ENCODE measurements at regions of chr14 and their contacts with region 1.

Region 1: GRCh38 chr14:105581551-105582341 is 55.4 kb downstream of the TMEM121 start:
- DNase-seq: no peak
- ATAC-seq: no peak
- H3K4me3 ChIP-seq: no peak overlapping the region
- H3K27ac ChIP-seq: no peak overlapping the region
- H3K4me1 ChIP-seq: no peaks in the 10 kb centered on the region
- H3K27me3 ChIP-seq: no peaks in the 10 kb centered on the region
- CTCF ChIP-seq: no peak
- EP300 ChIP-seq: no peak
- POLR2A ChIP-seq: no peak
- RAD21 ChIP-seq: no peak

Region 2: DNA sequence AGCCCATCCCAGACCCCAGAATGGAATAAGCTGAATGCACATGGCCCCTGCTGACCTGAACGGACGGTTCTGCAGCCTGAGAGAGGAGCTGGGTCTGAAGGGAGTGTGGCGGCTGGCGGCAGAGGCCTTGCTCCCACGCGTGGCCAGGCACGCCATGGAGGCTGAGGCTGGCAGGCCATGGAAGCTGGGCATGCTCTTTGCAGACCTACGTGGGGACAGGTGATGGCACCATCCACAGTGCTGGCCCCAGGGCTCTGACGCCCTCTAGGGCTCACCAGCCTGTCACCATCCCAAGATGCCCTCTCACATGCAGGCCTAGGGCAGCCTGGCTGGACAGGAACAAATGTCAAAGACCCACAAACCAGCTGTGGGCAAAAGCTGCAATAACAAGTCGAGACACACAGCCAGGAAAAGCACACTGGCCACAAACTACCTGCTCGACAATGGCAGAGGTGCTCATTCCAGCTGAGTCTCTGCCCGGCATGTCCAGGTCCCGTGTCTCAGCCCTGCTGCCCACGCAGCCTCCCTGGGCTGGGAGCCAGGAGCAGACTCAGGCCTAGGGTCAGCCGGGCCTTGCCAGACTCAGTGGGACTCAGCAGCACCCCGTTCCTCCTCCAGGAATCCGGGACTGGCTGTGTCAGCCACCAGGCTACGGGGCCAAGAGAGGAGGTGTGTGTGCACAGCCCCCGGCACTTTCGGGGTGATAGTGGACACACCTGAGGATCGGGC is 313.8 kb before region 1 on chr14:
- CTCF ChIA-PET with region 1: no interaction called
- POLR2A ChIA-PET with region 1: no interaction called
- in situ Hi-C with region 1: no loop called
- intact Hi-C with region 1: no loop called
- DNase-seq: no peak
- ATAC-seq: no peak
- H3K4me3 ChIP-seq: no peak overlapping the region
- H3K27ac ChIP-seq: no peak overlapping the region
- H3K4me1 ChIP-seq: peaks cover 0 to 5% of the 10 kb centered on the region in 2 experiments; a peak in 2 of 5 replicates
- H3K27me3 ChIP-seq: no peaks in the 10 kb centered on the region
- CTCF ChIP-seq: no peak
- EP300 ChIP-seq: no peak
- POLR2A ChIP-seq: no peak
- RAD21 ChIP-seq: no peak

Region 3: DNA sequence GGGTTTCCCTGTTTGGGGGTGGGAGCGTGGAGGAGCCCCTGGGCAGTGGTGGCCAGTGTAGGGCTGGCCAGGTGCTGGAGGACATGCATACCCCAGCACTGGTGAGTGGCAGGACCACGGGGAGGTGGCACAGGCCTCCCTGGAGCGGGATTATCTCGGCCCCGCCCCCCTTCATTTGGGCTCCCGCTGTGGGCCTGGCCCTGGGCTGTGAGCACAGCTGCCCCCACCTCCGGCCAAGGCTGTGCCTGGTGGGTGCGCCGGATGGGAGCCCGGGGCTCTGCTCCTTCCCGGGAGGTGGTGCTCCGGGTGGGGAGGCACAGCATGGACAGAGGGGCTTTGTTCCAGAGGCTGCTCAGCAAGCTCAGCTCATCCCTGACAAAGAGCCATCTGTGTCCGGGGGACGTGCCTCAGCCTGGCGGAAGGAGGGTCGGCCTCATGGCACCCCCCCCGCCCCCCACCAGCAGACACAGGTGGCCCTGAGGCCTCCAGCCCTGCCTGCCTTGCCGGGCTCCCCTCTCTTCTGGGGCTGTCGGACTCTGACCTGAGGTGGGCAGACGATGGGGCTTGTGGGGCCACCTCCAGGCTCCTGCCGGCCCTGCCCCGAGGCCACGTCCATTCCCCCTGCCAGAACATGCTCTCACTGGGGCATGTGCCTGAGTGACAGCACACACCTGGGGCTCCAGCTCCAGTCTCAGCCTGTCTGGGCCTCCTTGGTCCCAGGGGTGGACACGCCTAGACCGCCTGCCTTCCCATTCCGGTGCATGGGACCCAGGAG is 82.3 kb before region 1 on chr14:
- CTCF ChIA-PET with region 1: no interaction called
- POLR2A ChIA-PET with region 1: no interaction called
- in situ Hi-C with region 1: no loop called
- intact Hi-C with region 1: no loop called
- DNase-seq: no peak
- ATAC-seq: no peak; the same call in 2 of the 3 replicates
- H3K4me3 ChIP-seq: no peak overlapping the region
- H3K27ac ChIP-seq: no peak overlapping the region
- H3K4me1 ChIP-seq: peaks cover 0 to 57% of the 10 kb centered on the region in 2 experiments; a peak in 2 of 5 replicates
- H3K27me3 ChIP-seq: no peaks in the 10 kb centered on the region; a peak in 1 of 5 replicates
- CTCF ChIP-seq: no peak
- EP300 ChIP-seq: no peak
- POLR2A ChIP-seq: no peak
- RAD21 ChIP-seq: no peak

Region 4: GRCh38 chr14:105700622-105701288 is 119.0 kb after region 1 on chr14:
- CTCF ChIA-PET with region 1: no interaction called
- POLR2A ChIA-PET with region 1: no interaction called
- in situ Hi-C with region 1: loop called (anchors 5 kb)
- intact Hi-C with region 1: loop called (anchors 5 kb)
- DNase-seq: no peak
- ATAC-seq: no peak
- H3K4me3 ChIP-seq: no peak overlapping the region
- H3K27ac ChIP-seq: no peak overlapping the region
- H3K4me1 ChIP-seq: no peaks in the 10 kb centered on the region
- H3K27me3 ChIP-seq: no peaks in the 10 kb centered on the region
- CTCF ChIP-seq: no peak
- EP300 ChIP-seq: no peak
- POLR2A ChIP-seq: no peak
- RAD21 ChIP-seq: no peak

Measured in K562 (cell line).